Activated B cell treated with CpG ODN at 0.5 μM for 24 hours (primary cell): ENCODE measurements at regions of chr20 and their contacts with region 1.

Region 1: GRCh38 chr20:59032023-59032712 is at the start of gene ATP5F1E:
- DNase-seq: peak; percentile 98
- ATAC-seq: peak; percentile 96
- H3K4me3 Mint-ChIP-seq: peak within 1 kb of the TSS; percentile 96
- H3K27ac Mint-ChIP-seq: peak within 1 kb of the TSS; percentile 95
- H3K4me1 Mint-ChIP-seq: peaks cover 50% of the 10 kb centered on the region
- H3K27me3 Mint-ChIP-seq: no peaks in the 10 kb centered on the region
- CTCF ChIP-seq: no peak
- total RNA-seq, gene ATP5F1E: 84.0 and 86.1 TPM in 2 replicates

Region 2: GRCh38 chr20:58309575-58310290 is 722.4 kb before region 1 on chr20 and contains the start of gene RAB22A:
- CTCF ChIA-PET with region 1: no interaction called
- POLR2A ChIA-PET with region 1: interaction called, 4 read pairs
- intact Hi-C with region 1: loop called (anchors 1 kb)
- DNase-seq: peak; percentile 85
- ATAC-seq: peak; percentile 61
- H3K4me3 Mint-ChIP-seq: peak within 1 kb of the TSS; percentile 94
- H3K27ac Mint-ChIP-seq: peak within 1 kb of the TSS; percentile 94
- H3K4me1 Mint-ChIP-seq: peaks cover 58% of the 10 kb centered on the region
- H3K27me3 Mint-ChIP-seq: no peaks in the 10 kb centered on the region
- CTCF ChIP-seq: no peak
- total RNA-seq, gene RAB22A: 14.4 and 15.7 TPM in 2 replicates

Region 3: DNA sequence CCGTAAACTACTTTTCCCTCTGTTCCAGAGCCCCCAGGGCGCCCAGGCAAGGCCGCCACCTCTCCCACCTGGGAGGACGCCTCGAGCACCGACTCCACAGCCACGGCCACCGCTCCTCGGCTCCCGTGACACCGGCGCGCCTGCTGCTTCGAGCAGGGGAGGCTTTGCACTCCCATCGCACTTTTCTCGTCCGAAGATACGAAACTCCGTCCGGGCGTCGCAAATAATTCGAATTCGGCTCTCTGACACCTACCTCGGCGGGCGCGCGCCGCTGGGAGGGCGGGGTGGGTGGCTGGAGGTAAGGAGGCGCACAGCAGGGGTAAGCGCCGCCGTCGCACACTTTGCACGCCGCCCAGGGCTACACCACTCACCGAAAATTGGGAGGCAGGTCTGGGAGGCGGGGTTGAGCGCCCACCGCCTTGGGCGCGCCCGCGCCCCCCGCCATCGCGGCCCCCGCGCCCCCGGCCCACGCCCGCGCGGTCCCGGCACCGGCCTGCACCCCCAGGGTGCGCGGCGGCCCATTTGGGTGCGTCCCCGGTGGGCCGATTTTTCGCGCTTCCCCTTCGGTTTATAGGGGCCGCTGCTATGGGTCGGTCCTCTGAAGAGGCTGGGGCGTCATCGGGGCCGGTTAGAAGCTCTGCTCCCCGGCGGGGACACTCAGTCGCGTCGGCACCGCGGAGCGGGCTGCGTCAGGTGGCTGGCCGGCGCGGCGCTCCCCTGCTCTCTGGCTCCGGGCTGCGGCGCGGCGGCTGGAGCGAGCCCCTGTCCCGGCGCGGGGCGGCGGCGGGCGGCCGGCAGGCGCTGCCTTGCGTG is 143.4 kb before region 1 on chr20:
- CTCF ChIA-PET with region 1: no interaction called
- POLR2A ChIA-PET with region 1: interaction called, 75 read pairs
- intact Hi-C with region 1: loop called (anchors 1 kb)
- DNase-seq: peak; percentile 73
- ATAC-seq: peak; percentile 45
- H3K4me3 Mint-ChIP-seq: peak overlapping the region; percentile 84
- H3K27ac Mint-ChIP-seq: peak overlapping the region; percentile 59
- H3K4me1 Mint-ChIP-seq: peaks cover 27% of the 10 kb centered on the region
- H3K27me3 Mint-ChIP-seq: no peaks in the 10 kb centered on the region
- CTCF ChIP-seq: no peak

Region 4: DNA sequence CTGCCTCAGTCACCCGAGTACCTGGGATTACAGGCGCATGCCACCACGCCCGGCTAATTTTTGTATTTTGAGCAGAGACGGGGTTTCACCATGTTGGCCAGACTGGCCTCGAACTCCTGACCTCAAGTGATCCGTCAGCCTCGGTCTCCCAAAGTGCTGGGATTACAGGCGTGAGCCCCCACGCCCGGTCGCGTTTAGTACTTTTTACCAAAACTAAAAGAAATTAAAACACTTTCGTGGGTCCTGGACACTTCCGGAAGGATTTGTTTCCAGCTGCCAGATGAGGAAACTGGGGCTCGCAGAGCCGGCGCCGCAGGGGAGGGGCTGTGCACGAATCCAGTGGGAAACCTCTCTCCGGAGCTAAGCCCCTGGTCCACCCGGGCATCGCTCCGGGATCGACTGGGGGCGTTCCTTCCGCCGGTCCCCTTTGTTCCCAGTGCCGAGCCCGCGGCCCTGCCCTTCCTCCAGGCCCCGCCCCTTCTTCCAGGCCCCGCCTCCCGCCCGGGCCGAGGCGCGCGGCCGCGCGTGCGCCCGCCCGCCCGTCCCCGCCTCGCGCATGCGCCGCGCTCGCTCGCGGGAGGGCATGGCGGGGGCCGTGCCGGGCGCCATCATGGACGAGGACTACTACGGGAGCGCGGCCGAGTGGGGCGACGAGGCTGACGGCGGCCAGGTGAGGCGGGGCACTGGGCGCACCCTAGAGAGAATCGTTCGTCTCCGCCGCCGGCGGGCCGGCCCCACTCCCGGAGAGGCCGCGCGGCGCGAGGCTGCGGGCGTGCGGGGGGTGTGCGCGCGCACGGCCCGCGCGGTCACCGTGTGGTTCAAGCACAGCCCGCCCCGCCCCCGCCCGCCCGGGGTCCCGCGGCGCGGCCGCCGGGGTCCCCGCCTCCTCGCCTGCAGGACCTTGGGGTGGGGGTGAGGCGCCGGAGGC is 51.2 kb before region 1 on chr20 and contains the start of gene NELFCD:
- CTCF ChIA-PET with region 1: no interaction called
- POLR2A ChIA-PET with region 1: interaction called, 35 read pairs
- intact Hi-C with region 1: loop called (anchors 1 kb)
- DNase-seq: peak; percentile 95
- ATAC-seq: peak; percentile 89
- H3K4me3 Mint-ChIP-seq: peak within 1 kb of the TSS; percentile 91
- H3K27ac Mint-ChIP-seq: peak within 1 kb of the TSS; percentile 80
- H3K4me1 Mint-ChIP-seq: peaks cover 45% of the 10 kb centered on the region
- H3K27me3 Mint-ChIP-seq: no peaks in the 10 kb centered on the region
- CTCF ChIP-seq: no peak
- total RNA-seq, gene NELFCD: 97.2 and 107 TPM in 2 replicates

Region 5: GRCh38 chr20:59000886-59001447 is 31.2 kb before region 1 on chr20:
- CTCF ChIA-PET with region 1: interaction called, 4 read pairs
- POLR2A ChIA-PET with region 1: interaction called, 88 read pairs
- intact Hi-C with region 1: no loop called
- DNase-seq: no peak
- ATAC-seq: no peak
- H3K4me3 Mint-ChIP-seq: no peak overlapping the region
- H3K27ac Mint-ChIP-seq: no peak overlapping the region
- H3K4me1 Mint-ChIP-seq: peaks cover 53% of the 10 kb centered on the region
- H3K27me3 Mint-ChIP-seq: no peaks in the 10 kb centered on the region
- CTCF ChIP-seq: no peak

Region 6: GRCh38 chr20:59042796-59043660 is 10.9 kb after region 1 on chr20:
- CTCF ChIA-PET with region 1: no interaction called
- POLR2A ChIA-PET with region 1: interaction called, 64 read pairs
- intact Hi-C with region 1: loop called (anchors 1 kb)
- DNase-seq: peak; percentile 97
- ATAC-seq: peak; percentile 97
- H3K4me3 Mint-ChIP-seq: peak overlapping the region; percentile 95
- H3K27ac Mint-ChIP-seq: peak overlapping the region; percentile 91
- H3K4me1 Mint-ChIP-seq: peaks cover 52% of the 10 kb centered on the region
- H3K27me3 Mint-ChIP-seq: no peaks in the 10 kb centered on the region
- CTCF ChIP-seq: no peak

Region 7: GRCh38 chr20:59159493-59160376 is 127.6 kb after region 1 on chr20:
- CTCF ChIA-PET with region 1: no interaction called
- POLR2A ChIA-PET with region 1: interaction called, 10 read pairs
- intact Hi-C with region 1: no loop called
- DNase-seq: no peak
- ATAC-seq: peak; percentile 33
- H3K4me3 Mint-ChIP-seq: peak overlapping the region; percentile 65
- H3K27ac Mint-ChIP-seq: peak overlapping the region; percentile 37
- H3K4me1 Mint-ChIP-seq: peaks cover 57% of the 10 kb centered on the region
- H3K27me3 Mint-ChIP-seq: no peaks in the 10 kb centered on the region
- CTCF ChIP-seq: no peak